Left lung (tissue), 14 donors: ENCODE measurements at regions of chr7 and their contacts with region 1.

Region 1: GRCh38 chr7:121547544-121548092 is 151.5 kb upstream of the FAM3C start:
- DNase-seq: peak in 2 of 4 donors; percentile 56 to 71
- ATAC-seq: peak; percentile 96
- H3K4me3 ChIP-seq: no peak overlapping the region
- H3K27ac ChIP-seq: no peak overlapping the region
- H3K4me1 ChIP-seq: no peaks in the 10 kb centered on the region
- H3K27me3 ChIP-seq: no peaks in the 10 kb centered on the region
- CTCF ChIP-seq: peak; percentile 70 to 75

Region 2: GRCh38 chr7:121126801-121127534 is 420.6 kb before region 1 on chr7:
- intact Hi-C with region 1: loop called in 1 of 2 experiments (anchors 10 kb)
- DNase-seq: no peak
- ATAC-seq: no peak
- H3K4me3 ChIP-seq: no peak overlapping the region
- H3K27ac ChIP-seq: no peak overlapping the region
- H3K4me1 ChIP-seq: no peaks in the 10 kb centered on the region
- H3K27me3 ChIP-seq: no peaks in the 10 kb centered on the region
- CTCF ChIP-seq: no peak

Region 3: GRCh38 chr7:121366852-121367431 is 180.7 kb before region 1 on chr7:
- intact Hi-C with region 1: loop called in 1 of 2 experiments (anchors 5 kb)
- DNase-seq: peak in 1 of 4 donors; percentile 50
- ATAC-seq: peak; percentile 60
- H3K4me3 ChIP-seq: no peak overlapping the region
- H3K27ac ChIP-seq: no peak overlapping the region
- H3K4me1 ChIP-seq: peaks cover 0 to 8% of the 10 kb centered on the region in 2 donors
- H3K27me3 ChIP-seq: no peaks in the 10 kb centered on the region
- CTCF ChIP-seq: peak; percentile 60 to 61